ENCODE measurements at regions of chr15 and their contacts with region 1.

Region 1: GRCh38 chr15:58463815-58464650 is 32.2 kb downstream of the LIPC start:
- DNase-seq: no peak
- ATAC-seq: no peak
- H3K4me3 Mint-ChIP-seq: no peak overlapping the region
- H3K27ac Mint-ChIP-seq: no peak overlapping the region
- H3K4me1 Mint-ChIP-seq: peaks cover 1% of the 10 kb centered on the region
- H3K27me3 Mint-ChIP-seq: peaks cover 9% of the 10 kb centered on the region
- CTCF ChIP-seq: no peak

Region 2: GRCh38 chr15:58269455-58270414 is 194.3 kb before region 1 on chr15:
- CTCF ChIA-PET with region 1: no interaction called
- POLR2A ChIA-PET with region 1: interaction called, 11 read pairs
- intact Hi-C with region 1: no loop called
- DNase-seq: no peak
- ATAC-seq: no peak
- H3K4me3 Mint-ChIP-seq: no peak overlapping the region
- H3K27ac Mint-ChIP-seq: no peak overlapping the region
- H3K4me1 Mint-ChIP-seq: no peaks in the 10 kb centered on the region
- H3K27me3 Mint-ChIP-seq: peaks cover 3% of the 10 kb centered on the region
- CTCF ChIP-seq: no peak